ENCODE measurements at regions of chr14 and their contacts with region 1.

Region 1: DNA sequence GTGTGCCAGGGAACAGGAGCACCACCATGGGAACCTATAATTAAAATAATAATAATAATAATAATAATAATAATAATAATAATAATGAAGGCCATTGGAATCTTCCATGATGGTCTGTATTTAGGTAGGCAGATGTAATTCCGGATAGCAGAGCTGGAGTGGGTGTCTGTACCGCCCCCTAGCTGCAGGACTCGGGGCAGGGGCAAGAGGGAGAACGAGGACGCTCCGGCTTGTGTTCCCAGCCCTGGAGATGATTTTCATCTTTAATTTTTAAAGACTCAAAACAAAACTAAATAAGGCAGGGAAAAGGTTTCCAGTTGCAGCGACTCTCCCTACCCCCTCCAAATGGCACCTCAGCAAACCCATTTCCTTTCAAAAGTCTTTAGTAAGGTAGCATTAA is 501.1 kb downstream of the VRK1 start:
- DNase-seq: peak; percentile 73
- ATAC-seq: peak; percentile 66
- H3K4me3 Mint-ChIP-seq: no peak overlapping the region
- H3K27ac Mint-ChIP-seq: no peak overlapping the region
- H3K4me1 Mint-ChIP-seq: peaks cover 29% of the 10 kb centered on the region
- H3K27me3 Mint-ChIP-seq: no peaks in the 10 kb centered on the region
- CTCF ChIP-seq: peak; percentile 67

Region 2: GRCh38 chr14:97185186-97185585 is 113.1 kb before region 1 on chr14:
- CTCF ChIA-PET with region 1: interaction called, 11 read pairs
- POLR2A ChIA-PET with region 1: no interaction called
- DNase-seq: no peak
- ATAC-seq: peak; percentile 67; the same call in 1 of the 2 replicates
- H3K4me3 Mint-ChIP-seq: no peak overlapping the region
- H3K27ac Mint-ChIP-seq: no peak overlapping the region
- H3K4me1 Mint-ChIP-seq: peaks cover 7% of the 10 kb centered on the region
- H3K27me3 Mint-ChIP-seq: peaks cover 2% of the 10 kb centered on the region; the same call in 1 of the 2 replicates
- CTCF ChIP-seq: 0 out of 2 replicates have a peak, but pooled peaks have one; percentile 13

Region 3: GRCh38 chr14:97206916-97207315 is 91.4 kb before region 1 on chr14:
- CTCF ChIA-PET with region 1: no interaction called
- POLR2A ChIA-PET with region 1: no interaction called
- DNase-seq: no peak
- ATAC-seq: no peak
- H3K4me3 Mint-ChIP-seq: no peak overlapping the region
- H3K27ac Mint-ChIP-seq: no peak overlapping the region
- H3K4me1 Mint-ChIP-seq: peaks cover 3% of the 10 kb centered on the region; the same call in 1 of the 2 replicates
- H3K27me3 Mint-ChIP-seq: no peaks in the 10 kb centered on the region
- CTCF ChIP-seq: no peak

Region 4: GRCh38 chr14:97359341-97359740 is 61.0 kb after region 1 on chr14:
- CTCF ChIA-PET with region 1: no interaction called
- POLR2A ChIA-PET with region 1: no interaction called
- DNase-seq: no peak
- ATAC-seq: no peak
- H3K4me3 Mint-ChIP-seq: no peak overlapping the region
- H3K27ac Mint-ChIP-seq: no peak overlapping the region
- H3K4me1 Mint-ChIP-seq: no peaks in the 10 kb centered on the region
- H3K27me3 Mint-ChIP-seq: peaks cover 3% of the 10 kb centered on the region; the same call in 1 of the 2 replicates
- CTCF ChIP-seq: no peak